ENCODE measurements at regions of chr1 and their contacts with region 1.

Region 1: GRCh38 chr1:154206196-154206595 is at the start of gene CFAP141:
- DNase-seq: no peak
- ATAC-seq: no peak
- total RNA-seq, gene CFAP141: not detected

Region 2: GRCh38 chr1:154176337-154176736 is 29.9 kb before region 1 on chr1:
- intact Hi-C with region 1: no loop called
- DNase-seq: no peak
- ATAC-seq: peak; percentile 65

Region 3: DNA sequence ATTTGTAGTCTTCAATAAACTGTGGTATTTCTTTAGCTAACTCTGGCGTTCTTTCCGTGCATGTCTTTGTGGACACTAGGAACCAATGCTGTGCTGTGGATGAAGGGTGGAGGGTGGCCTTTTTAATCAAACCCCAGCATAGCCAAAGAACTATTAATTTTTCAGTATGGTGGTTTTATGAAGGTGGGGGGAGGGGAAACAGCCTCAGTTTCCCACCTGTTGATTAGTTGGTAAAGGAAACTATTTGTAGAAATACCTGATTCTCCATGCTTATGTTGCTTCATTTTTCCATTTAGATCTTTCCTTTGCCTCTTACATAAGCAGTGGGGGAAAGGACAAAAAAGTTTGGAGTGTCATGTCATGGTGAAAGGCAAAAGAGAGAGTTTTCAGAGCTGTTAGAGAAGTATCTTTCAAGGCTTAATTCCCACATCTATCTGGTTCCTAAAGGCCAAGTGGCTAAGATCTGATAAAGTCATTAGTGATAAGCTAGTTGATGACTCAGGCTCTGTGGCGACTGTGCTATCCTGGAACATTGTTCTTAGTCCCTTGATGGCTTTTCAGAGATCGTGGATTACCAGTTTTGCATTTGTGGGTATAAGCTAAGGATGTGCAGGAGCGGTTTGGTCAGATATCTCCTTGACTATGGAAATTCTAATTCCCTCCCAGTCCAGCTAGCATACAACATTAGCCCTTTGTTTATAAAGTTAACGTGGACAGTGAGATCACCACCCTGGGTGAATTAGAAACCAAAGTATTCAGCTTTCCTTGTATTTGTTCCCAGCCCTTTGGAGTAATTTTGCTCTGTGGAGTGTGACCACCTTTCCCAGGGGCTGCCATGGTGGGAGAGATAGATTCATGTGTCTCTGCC is 57.5 kb after region 1 on chr1:
- intact Hi-C with region 1: loop called (anchors 10 kb)
- DNase-seq: no peak
- ATAC-seq: no peak

Measured in Right ventricle myocardium superior (tissue), 1 donor.